Activated CD4-positive, alpha-beta memory T cell treated with anti-CD3 and anti-CD28 coated beads, Interleukin-2, amount 10 ng/mL, durations not matched to agents 7 days and 5 days (primary cell): ENCODE measurements at regions of chr11 and their contacts with region 1.

Region 1: GRCh38 chr11:102390667-102391465 is 43.9 kb downstream of the BIRC2 start:
- DNase-seq: peak; percentile 59
- H3K4me3 Mint-ChIP-seq: no peak overlapping the region
- H3K27ac Mint-ChIP-seq: peak overlapping the region; percentile 23
- H3K4me1 Mint-ChIP-seq: peaks cover 13% of the 10 kb centered on the region
- H3K27me3 Mint-ChIP-seq: no peaks in the 10 kb centered on the region

Region 2: DNA sequence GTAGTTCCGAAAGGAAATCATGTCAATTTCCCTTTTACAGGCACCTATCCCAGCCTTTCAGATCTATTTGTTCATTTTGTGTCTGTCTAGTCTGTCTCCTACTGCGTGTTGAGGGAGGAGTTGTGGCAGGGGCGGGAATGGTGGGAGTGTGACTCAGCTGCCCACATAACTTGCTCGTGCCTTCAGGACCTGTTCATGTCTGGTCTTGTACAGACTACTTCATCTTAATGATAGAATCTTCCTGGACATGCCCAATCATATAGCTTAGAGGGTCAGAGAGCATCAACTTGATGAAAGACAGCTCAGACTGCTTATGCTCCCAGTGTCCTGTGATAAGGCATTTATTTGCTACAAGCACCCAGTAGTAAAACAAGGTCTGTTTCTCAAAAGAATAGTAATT is 134.6 kb before region 1 on chr11:
- CTCF ChIA-PET with region 1: no interaction called
- POLR2A ChIA-PET with region 1: no interaction called
- DNase-seq: no peak
- H3K4me3 Mint-ChIP-seq: no peak overlapping the region
- H3K27ac Mint-ChIP-seq: no peak overlapping the region
- H3K4me1 Mint-ChIP-seq: no peaks in the 10 kb centered on the region
- H3K27me3 Mint-ChIP-seq: no peaks in the 10 kb centered on the region

Region 3: GRCh38 chr11:102346748-102347461 is 44.0 kb before region 1 on chr11 and contains the start of gene BIRC2:
- CTCF ChIA-PET with region 1: interaction called, 20 read pairs
- POLR2A ChIA-PET with region 1: interaction called, 4 read pairs
- DNase-seq: peak; percentile 95
- H3K4me3 Mint-ChIP-seq: peak within 1 kb of the TSS; percentile 98
- H3K27ac Mint-ChIP-seq: peak within 1 kb of the TSS; percentile 97
- H3K4me1 Mint-ChIP-seq: peaks cover 34% of the 10 kb centered on the region
- H3K27me3 Mint-ChIP-seq: no peaks in the 10 kb centered on the region
- total RNA-seq, gene BIRC2: 36.0 to 39.7 TPM

Region 4: DNA sequence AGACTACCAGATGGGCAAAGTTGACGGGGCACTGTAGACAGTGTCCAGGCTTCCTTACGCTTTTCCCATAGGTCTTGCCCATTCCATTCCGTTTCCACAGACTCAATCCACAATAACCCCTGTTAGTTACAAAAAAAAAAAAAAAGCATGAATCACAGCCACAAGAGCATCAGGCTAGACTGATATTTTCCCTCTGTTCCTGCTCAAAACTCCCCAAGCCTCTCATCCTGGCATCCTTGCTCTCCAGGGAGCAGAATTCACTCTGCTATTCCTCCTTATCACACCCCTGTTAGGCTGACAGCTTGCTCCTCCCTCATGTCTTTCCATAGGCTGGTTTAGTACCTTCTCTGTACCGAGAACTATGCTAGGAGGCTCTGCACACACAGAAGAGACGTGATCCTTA is 19.5 kb after region 1 on chr11:
- CTCF ChIA-PET with region 1: interaction called, 31 read pairs
- POLR2A ChIA-PET with region 1: interaction called, 4 read pairs
- DNase-seq: no peak
- H3K4me3 Mint-ChIP-seq: no peak overlapping the region
- H3K27ac Mint-ChIP-seq: no peak overlapping the region
- H3K4me1 Mint-ChIP-seq: peaks cover 44% of the 10 kb centered on the region
- H3K27me3 Mint-ChIP-seq: no peaks in the 10 kb centered on the region

Region 5: DNA sequence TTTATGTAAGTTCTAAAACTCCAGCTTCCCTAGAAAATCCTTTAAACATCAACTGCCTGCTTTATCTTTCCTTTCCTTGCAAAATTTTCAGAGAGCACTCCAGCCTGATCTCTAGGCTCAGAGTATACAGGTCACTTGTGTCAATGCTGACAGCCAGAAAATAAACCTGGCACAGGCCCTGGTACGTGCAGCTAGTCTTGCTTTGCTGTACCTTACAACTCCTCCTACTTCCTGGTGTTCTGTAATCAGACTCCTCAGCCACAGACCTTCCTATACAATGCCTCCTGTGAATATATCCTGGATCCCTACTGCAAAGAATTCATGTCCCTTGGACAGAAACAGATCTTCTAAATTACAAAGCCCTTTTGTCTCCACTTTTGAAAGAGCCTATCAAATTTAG is 85.9 kb after region 1 on chr11:
- CTCF ChIA-PET with region 1: interaction called, 11 read pairs
- POLR2A ChIA-PET with region 1: no interaction called
- DNase-seq: peak; percentile 57
- H3K4me3 Mint-ChIP-seq: no peak overlapping the region
- H3K27ac Mint-ChIP-seq: peak overlapping the region; percentile 59
- H3K4me1 Mint-ChIP-seq: peaks cover 41% of the 10 kb centered on the region
- H3K27me3 Mint-ChIP-seq: no peaks in the 10 kb centered on the region

Region 6: GRCh38 chr11:102614485-102614884 is 223.6 kb after region 1 on chr11:
- CTCF ChIA-PET with region 1: interaction called, 15 read pairs
- POLR2A ChIA-PET with region 1: no interaction called
- DNase-seq: no peak
- H3K4me3 Mint-ChIP-seq: no peak overlapping the region
- H3K27ac Mint-ChIP-seq: no peak overlapping the region
- H3K4me1 Mint-ChIP-seq: peaks cover 9% of the 10 kb centered on the region
- H3K27me3 Mint-ChIP-seq: peaks cover 5% of the 10 kb centered on the region